CD8-positive, alpha-beta T cell (primary cell): ENCODE measurements at regions of chr9 and their contacts with region 1.

Region 1: DNA sequence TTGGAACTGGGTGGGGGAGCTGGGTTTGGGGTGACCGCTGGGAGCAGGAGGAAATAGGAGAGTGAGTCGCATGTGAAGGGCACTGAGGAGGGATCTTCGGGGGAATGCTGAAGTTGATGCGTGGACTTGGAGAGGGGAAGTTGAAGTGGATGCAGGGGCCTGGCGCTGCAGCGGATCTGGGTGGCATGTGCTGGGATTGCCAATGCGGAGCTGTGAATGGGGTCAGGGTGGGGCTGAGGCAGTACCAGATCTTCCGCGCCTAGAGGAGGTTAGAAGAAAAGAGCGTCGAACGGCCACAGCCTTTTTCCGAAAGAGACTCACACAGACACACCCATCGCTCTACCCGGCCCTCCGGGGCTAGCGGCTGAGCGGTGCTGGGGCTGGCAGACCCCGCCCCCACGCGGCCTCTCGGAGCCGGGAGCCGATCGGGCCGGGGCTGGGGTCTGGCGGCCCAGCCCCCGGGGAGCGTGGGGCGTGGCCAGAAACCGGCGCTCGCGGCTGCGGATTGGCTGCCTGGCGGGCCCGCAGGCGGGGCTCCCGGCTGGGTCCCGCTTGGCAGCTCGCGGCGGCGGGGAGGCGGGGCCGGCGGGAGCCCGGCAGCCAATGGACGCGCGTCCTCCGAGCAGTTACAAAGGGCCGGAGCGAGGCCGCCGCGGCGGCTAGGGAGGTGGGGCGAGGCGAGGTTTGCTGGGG is at the start of gene TGFBR1:
- DNase-seq: peak; percentile 81 to 96 (median 89)
- ATAC-seq: peak; percentile 81
- H3K4me3 ChIP-seq: peak within 1 kb of the TSS; percentile 68 to 85
- H3K4me3 Mint-ChIP-seq: peak within 1 kb of the TSS; percentile 90
- H3K27ac ChIP-seq: peak within 1 kb of the TSS; percentile 57 to 70
- H3K27ac Mint-ChIP-seq: peak within 1 kb of the TSS; percentile 91
- H3K4me1 ChIP-seq: peaks cover 48% of the 10 kb centered on the region
- H3K4me1 Mint-ChIP-seq: peaks cover 64% of the 10 kb centered on the region
- H3K27me3 ChIP-seq: no peaks in the 10 kb centered on the region
- H3K27me3 Mint-ChIP-seq: no peaks in the 10 kb centered on the region
- CTCF ChIP-seq: no peak
- total RNA-seq, gene TGFBR1: 24.2 to 25.8 TPM

Region 2: GRCh38 chr9:98101868-98102273 is 1002.7 kb before region 1 on chr9:
- CTCF ChIA-PET with region 1: no interaction called
- POLR2A ChIA-PET with region 1: no interaction called
- intact Hi-C with region 1: loop called in 1 of 2 experiments (anchors 10 kb)
- DNase-seq: peak; percentile 64 to 97 (median 82)
- ATAC-seq: peak; percentile 95
- H3K4me3 ChIP-seq: peak overlapping the region; percentile 3 to 8
- H3K4me3 Mint-ChIP-seq: peak overlapping the region; percentile 68
- H3K27ac ChIP-seq: peak overlapping the region; percentile 33 to 76
- H3K27ac Mint-ChIP-seq: peak overlapping the region; percentile 97
- H3K4me1 ChIP-seq: peaks cover 87% of the 10 kb centered on the region
- H3K4me1 Mint-ChIP-seq: peaks cover 82% of the 10 kb centered on the region
- H3K27me3 ChIP-seq: no peaks in the 10 kb centered on the region
- H3K27me3 Mint-ChIP-seq: no peaks in the 10 kb centered on the region
- CTCF ChIP-seq: no peak

Region 3: DNA sequence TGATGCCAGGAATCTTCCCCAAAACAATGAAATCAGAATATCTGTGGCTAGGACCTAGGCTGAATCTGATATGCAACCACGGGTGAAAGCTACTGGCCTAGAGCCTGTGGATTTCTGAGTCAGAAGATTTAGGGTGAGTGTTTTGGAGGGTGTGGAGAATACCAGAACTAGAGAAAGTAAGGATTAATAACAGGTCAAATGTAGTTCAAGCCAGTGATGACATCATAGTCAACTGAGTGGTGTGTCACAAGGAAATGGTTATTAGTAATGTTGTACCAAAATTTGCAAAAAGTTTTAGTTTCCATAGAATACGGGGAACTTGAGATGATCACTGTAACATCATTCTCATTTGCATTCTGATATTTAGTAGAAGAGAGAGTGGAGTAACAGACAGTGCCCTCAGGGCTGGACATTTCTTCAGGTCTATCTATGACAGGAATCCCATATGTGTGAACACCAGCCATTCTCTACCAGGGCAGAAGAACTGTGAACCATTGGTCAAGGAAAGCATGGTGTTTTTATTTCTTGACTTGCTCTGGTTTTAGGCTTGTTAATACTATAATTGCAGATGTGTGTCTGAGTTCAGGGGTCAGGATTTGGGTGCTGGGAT is 293.4 kb before region 1 on chr9:
- CTCF ChIA-PET with region 1: no interaction called
- POLR2A ChIA-PET with region 1: no interaction called
- intact Hi-C with region 1: no loop called
- DNase-seq: no peak
- ATAC-seq: no peak
- H3K4me3 ChIP-seq: no peak overlapping the region
- H3K4me3 Mint-ChIP-seq: no peak overlapping the region
- H3K27ac ChIP-seq: no peak overlapping the region
- H3K27ac Mint-ChIP-seq: no peak overlapping the region
- H3K4me1 ChIP-seq: peaks cover 10% of the 10 kb centered on the region
- H3K4me1 Mint-ChIP-seq: peaks cover 27% of the 10 kb centered on the region
- H3K27me3 ChIP-seq: no peaks in the 10 kb centered on the region
- H3K27me3 Mint-ChIP-seq: no peaks in the 10 kb centered on the region
- CTCF ChIP-seq: no peak

Region 4: DNA sequence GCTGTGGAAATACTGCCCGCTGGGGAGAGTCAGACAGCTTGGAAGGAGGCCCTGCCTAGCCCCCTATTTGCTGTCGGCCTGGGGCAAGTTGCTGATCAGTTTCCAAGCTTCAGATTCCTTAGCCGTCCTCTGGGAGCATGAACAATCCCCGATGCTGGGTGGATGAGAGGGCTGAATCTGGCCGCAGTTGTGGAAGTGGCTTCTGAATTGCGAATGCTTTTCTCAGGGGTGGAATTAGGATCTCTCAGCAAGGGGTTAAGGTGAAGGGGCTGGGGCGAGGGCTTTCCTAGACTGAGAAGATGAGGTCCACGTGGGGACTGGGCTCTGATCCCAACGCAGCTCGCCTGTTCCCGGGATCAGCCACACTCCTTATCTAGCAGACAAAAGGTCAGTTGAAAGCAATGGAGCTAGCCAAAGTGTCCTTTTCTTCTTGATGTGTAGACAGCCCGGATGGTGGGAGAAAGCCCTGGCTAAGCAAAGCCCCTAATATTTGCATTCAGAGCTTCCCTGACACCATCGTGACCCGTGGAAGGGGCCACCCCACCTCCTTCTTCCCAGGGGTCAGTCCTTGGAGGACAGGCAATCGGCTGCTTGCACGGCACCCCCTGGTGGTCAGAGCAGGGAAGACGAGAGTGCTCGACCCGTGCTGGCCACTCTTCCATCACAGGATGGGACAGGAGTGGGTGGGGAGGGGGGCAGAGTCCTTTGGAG is 106.0 kb before region 1 on chr9:
- CTCF ChIA-PET with region 1: interaction called, 45 read pairs
- POLR2A ChIA-PET with region 1: interaction called, 3 read pairs
- intact Hi-C with region 1: loop called in 1 of 2 experiments (anchors 1 kb)
- DNase-seq: peak in 8 of 9 experiments; percentile 17 to 67 (median 60)
- ATAC-seq: peak; percentile 59
- H3K4me3 ChIP-seq: no peak overlapping the region
- H3K4me3 Mint-ChIP-seq: no peak overlapping the region
- H3K27ac ChIP-seq: no peak overlapping the region
- H3K27ac Mint-ChIP-seq: no peak overlapping the region
- H3K4me1 ChIP-seq: peaks cover 19% of the 10 kb centered on the region
- H3K4me1 Mint-ChIP-seq: peaks cover 17% of the 10 kb centered on the region
- H3K27me3 ChIP-seq: no peaks in the 10 kb centered on the region
- H3K27me3 Mint-ChIP-seq: no peaks in the 10 kb centered on the region
- CTCF ChIP-seq: peak; percentile 62

Region 5: DNA sequence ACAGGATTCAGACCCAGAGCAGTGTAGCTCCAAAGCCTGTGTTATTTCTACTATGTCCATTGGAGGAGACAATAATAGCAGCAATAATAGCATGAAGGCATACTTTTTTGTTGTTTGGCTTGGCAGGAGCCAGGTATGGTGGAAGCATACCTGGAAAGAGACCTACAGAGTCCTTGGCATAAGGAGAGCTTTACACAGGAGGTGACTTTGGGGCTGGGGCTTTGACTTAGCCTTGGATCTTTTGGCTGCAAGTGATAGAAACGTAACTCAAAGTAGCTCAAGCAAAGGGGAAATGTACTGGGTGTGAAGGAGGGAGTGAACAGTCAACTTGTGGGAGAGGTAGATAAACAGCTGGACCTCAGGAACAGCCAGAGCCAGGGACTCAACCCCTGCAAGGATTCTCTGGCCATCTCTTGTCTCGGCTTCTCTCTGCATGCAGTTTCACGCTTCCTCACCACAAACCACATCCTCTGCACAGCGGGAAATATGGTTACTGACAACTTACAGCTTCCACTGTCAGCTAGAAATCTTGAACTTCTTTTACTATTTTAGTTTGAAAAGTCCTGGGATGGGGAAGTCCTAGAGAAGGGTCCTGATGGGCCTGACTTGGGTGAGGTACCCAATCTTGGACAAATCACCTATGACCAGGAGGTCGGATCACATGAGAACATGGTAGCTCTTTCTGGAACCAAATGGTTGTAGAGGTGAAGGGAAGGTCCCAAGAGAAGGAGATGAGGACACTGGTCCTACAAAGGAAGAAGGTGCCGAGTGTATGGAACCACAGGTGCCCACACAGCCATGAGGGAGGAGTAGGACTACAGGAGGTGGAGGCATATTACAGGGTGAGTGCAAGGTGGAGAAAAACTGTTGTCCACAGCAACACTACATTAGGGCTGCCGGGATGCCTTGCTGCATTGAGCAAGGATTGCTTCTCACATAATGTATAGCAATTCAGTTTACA is 46.7 kb before region 1 on chr9:
- CTCF ChIA-PET with region 1: interaction called, 13 read pairs
- POLR2A ChIA-PET with region 1: interaction called, 6 read pairs
- intact Hi-C with region 1: loop called in 1 of 2 experiments (anchors 1 kb)
- DNase-seq: peak; percentile 41 to 91 (median 79)
- ATAC-seq: peak; percentile 67
- H3K4me3 ChIP-seq: peak overlapping the region; percentile 49
- H3K4me3 Mint-ChIP-seq: peak overlapping the region; percentile 85
- H3K27ac ChIP-seq: peak overlapping the region in 1 of 2 experiments; percentile 78
- H3K27ac Mint-ChIP-seq: peak overlapping the region; percentile 85
- H3K4me1 ChIP-seq: peaks cover 65% of the 10 kb centered on the region
- H3K4me1 Mint-ChIP-seq: peaks cover 85% of the 10 kb centered on the region
- H3K27me3 ChIP-seq: no peaks in the 10 kb centered on the region
- H3K27me3 Mint-ChIP-seq: no peaks in the 10 kb centered on the region
- CTCF ChIP-seq: no peak

Region 6: DNA sequence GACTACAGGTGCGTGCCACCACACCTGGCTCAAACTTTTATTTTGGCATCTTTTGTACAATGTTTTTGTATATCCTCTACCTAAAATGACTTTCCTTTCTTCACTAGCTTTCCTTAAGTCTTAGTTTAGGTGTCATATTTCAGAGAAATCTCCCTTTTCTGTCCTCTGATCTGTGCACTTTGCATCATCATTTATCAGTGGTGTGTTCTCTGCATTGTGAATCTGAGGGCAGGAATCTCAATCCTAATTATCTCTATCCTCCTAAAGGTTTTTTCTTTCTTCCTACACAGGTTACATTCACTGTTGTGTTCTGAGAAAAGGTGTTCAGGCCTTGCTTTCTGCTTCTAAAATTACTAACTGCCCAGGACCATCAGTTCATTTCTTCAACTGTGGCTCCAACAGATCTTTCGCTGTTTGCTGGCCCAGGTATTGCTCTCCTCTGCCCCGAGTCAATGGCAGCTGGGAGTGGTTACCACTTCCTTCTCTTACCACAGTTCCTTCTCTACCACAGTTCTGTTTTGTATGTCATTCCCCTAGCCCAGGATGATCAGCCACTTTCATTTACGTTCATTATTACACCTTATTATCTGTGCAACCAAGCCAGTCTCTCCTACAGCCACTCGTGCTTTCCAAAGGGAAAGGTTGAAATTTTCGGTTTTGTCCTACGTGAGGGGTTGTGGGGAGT is 14.3 kb after region 1 on chr9:
- CTCF ChIA-PET with region 1: interaction called, 7 read pairs
- POLR2A ChIA-PET with region 1: interaction called, 9 read pairs
- intact Hi-C with region 1: loop called (anchors 1 to 2 kb)
- DNase-seq: peak in 8 of 9 experiments; percentile 32 to 83 (median 62)
- ATAC-seq: peak; percentile 96
- H3K4me3 ChIP-seq: peak overlapping the region; percentile 15 to 36
- H3K4me3 Mint-ChIP-seq: peak overlapping the region; percentile 61
- H3K27ac ChIP-seq: peak overlapping the region; percentile 28 to 38
- H3K27ac Mint-ChIP-seq: peak overlapping the region; percentile 83
- H3K4me1 ChIP-seq: peaks cover 86% of the 10 kb centered on the region
- H3K4me1 Mint-ChIP-seq: peaks cover 91% of the 10 kb centered on the region
- H3K27me3 ChIP-seq: no peaks in the 10 kb centered on the region
- H3K27me3 Mint-ChIP-seq: no peaks in the 10 kb centered on the region
- CTCF ChIP-seq: no peak

Region 7: GRCh38 chr9:99221621-99222415 is 117.2 kb after region 1 on chr9 and contains the starts of genes ALG2 and SEC61B:
- CTCF ChIA-PET with region 1: no interaction called
- POLR2A ChIA-PET with region 1: no interaction called
- intact Hi-C with region 1: loop called (anchors 2 to 5 kb)
- DNase-seq: peak; percentile 87 to 96 (median 94)
- ATAC-seq: peak; percentile 88
- H3K4me3 ChIP-seq: peak within 1 kb of the TSS; percentile 79 to 90
- H3K4me3 Mint-ChIP-seq: peak within 1 kb of the TSS; percentile 99
- H3K27ac ChIP-seq: peak within 1 kb of the TSS; percentile 95 to 99
- H3K27ac Mint-ChIP-seq: peak within 1 kb of the TSS; percentile 100
- H3K4me1 ChIP-seq: peaks cover 30% of the 10 kb centered on the region
- H3K4me1 Mint-ChIP-seq: peaks cover 80% of the 10 kb centered on the region
- H3K27me3 ChIP-seq: no peaks in the 10 kb centered on the region
- H3K27me3 Mint-ChIP-seq: no peaks in the 10 kb centered on the region
- CTCF ChIP-seq: no peak
- total RNA-seq, gene ALG2: 21.0 to 24.7 TPM
- total RNA-seq, gene SEC61B: 107 to 108 TPM

Region 8: DNA sequence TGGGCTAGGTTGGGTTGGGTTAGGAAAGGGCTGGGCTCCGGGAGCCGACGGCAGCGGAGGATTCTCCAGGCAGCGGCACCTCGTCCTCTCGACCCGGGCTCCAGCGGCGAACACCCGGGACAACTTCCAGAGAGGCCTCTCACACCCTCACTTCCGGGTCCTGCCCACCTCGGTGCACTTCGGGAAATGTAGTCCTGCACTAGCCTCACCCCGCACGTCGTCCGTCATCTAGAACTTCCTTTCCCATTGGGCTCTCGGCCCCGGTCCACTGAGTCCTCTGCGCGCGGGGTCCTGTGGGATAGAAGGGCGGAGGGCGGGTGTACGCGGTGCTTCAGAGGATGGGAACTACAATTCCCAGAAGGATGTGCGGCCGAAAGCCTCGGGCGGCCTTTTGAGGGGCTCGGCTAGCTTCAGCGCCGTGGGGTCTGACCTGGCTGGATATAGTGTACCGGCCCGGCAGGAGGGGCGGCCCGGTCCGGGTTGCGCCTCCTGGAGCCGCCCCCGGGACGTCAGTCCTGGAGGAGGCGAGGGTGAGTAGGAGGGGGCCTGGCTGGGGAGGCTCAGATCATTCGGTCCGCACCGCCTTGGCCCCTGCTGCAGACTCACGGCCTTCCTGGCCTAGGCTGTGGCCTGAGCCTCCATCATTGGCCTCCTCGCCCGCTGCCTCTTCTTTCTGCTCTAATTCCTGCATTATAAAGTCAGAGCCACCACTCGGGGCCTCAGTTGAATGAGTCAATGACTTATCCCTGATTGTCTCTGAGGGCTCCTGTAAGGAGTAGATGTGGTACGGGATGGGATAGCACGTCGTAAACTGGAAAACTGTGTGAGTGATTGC is 994.5 kb after region 1 on chr9 and contains the starts of genes ERP44 and INVS:
- CTCF ChIA-PET with region 1: no interaction called
- POLR2A ChIA-PET with region 1: no interaction called
- intact Hi-C with region 1: loop called in 1 of 2 experiments (anchors 10 kb)
- DNase-seq: peak; percentile 93 to 99 (median 96)
- ATAC-seq: peak; percentile 99
- H3K4me3 ChIP-seq: peak within 1 kb of the TSS; percentile 95 to 98
- H3K4me3 Mint-ChIP-seq: peak within 1 kb of the TSS; percentile 99
- H3K27ac ChIP-seq: peak within 1 kb of the TSS; percentile 72 to 85
- H3K27ac Mint-ChIP-seq: peak within 1 kb of the TSS; percentile 97
- H3K4me1 ChIP-seq: peaks cover 31% of the 10 kb centered on the region
- H3K4me1 Mint-ChIP-seq: peaks cover 44% of the 10 kb centered on the region
- H3K27me3 ChIP-seq: no peaks in the 10 kb centered on the region
- H3K27me3 Mint-ChIP-seq: no peaks in the 10 kb centered on the region
- CTCF ChIP-seq: no peak
- total RNA-seq, gene ERP44: 7.6 to 8.5 TPM
- total RNA-seq, gene INVS: 12.5 to 13.2 TPM